BJ (cell line): ENCODE measurements at regions of chr1 and their contacts with region 1.

Region 1: GRCh38 chr1:231357831-231358354 is 19.8 kb downstream of the SPRTN start:
- DNase-seq: peak; percentile 18
- H3K4me3 ChIP-seq: no peak overlapping the region
- H3K27me3 ChIP-seq: no peaks in the 10 kb centered on the region
- CTCF ChIP-seq: peak; percentile 70

Region 2: GRCh38 chr1:231590453-231591198 is 232.7 kb after region 1 on chr1:
- CTCF ChIA-PET with region 1: interaction called, 12 read pairs
- POLR2A ChIA-PET with region 1: no interaction called
- DNase-seq: no peak
- H3K4me3 ChIP-seq: no peak overlapping the region
- H3K27me3 ChIP-seq: no peaks in the 10 kb centered on the region
- CTCF ChIP-seq: peak; percentile 84